GM12878 (cell line): ENCODE measurements at regions of chr9 and their contacts with region 1.

Region 1: GRCh38 chr9:125746017-125746773 is 978 bp upstream of the PBX3 start:
- DNase-seq: peak; percentile 82
- ATAC-seq: peak; percentile 86
- H3K4me3 ChIP-seq: peak overlapping the region; percentile 81; the same call in 1 of the 2 replicates
- H3K27ac ChIP-seq: peak overlapping the region; percentile 74
- H3K4me1 ChIP-seq: peaks cover 7% of the 10 kb centered on the region
- H3K27me3 ChIP-seq: no peaks in the 10 kb centered on the region
- CTCF ChIP-seq: no peak
- EP300 ChIP-seq: no peak
- POLR2A ChIP-seq: peak; percentile 85
- RAD21 ChIP-seq: no peak

Region 2: GRCh38 chr9:125700791-125701190 is 45.4 kb before region 1 on chr9:
- CTCF ChIA-PET with region 1: interaction called, 5 read pairs
- POLR2A ChIA-PET with region 1: interaction called, 15 read pairs
- RAD21 ChIA-PET with region 1: interaction called, 35 read pairs
- SMC1A ChIA-PET with region 1: interaction called, 34 read pairs
- in situ Hi-C with region 1: no loop called
- intact Hi-C with region 1: no loop called
- DNase-seq: peak; percentile 84
- ATAC-seq: peak; percentile 89
- H3K4me3 ChIP-seq: peak overlapping the region; percentile 46; the same call in 1 of the 2 replicates
- H3K27ac ChIP-seq: peak overlapping the region; percentile 68
- H3K4me1 ChIP-seq: peaks cover 22% of the 10 kb centered on the region
- H3K27me3 ChIP-seq: no peaks in the 10 kb centered on the region
- CTCF ChIP-seq: no peak
- EP300 ChIP-seq: peak; percentile 81 to 82; a peak in 2 of 4 replicates
- POLR2A ChIP-seq: no peak
- RAD21 ChIP-seq: no peak; the same call in 1 of the 2 replicates

Region 3: DNA sequence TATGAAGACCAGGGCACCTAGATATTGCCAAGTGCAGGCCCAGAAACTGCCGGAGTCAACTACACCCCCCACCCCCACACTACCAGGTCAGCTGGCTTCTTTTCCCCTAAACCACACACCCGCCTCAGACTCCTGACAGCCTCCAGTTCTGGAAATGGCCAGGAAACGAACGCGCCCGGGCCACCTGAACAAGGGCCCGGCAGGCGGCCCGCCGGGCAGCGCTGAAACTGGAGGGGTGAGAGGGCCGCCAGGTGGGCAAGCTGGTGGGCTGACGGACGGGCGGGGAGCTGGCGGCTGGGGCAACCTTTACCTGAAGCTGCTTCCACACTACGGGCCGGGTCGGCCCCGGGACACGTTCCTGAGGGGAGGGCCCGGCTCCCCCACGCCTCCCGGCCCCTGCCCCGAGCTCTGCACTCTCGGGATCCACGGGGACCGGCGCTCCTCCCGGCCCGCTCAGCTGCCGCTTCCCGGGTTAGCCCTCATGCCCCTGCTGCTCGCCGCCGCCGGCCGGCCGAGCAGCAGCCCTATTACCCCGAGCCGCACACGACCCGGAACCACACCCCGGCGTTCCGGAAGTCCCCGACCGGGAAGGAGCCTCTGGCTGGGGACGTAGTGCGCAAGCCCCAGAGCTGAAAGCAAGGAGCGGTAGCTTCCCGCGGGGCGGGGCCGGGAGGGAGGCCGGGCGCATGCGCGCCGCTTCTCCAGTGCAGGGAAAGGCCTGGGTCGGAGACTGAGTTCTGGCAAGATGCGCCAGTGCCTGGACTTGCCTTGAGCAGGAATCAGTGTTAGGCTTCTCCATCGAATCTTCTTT is 39.3 kb before region 1 on chr9 and contains the start of gene MAPKAP1:
- CTCF ChIA-PET with region 1: interaction called, 5 read pairs
- POLR2A ChIA-PET with region 1: interaction called, 15 read pairs
- RAD21 ChIA-PET with region 1: interaction called, 35 read pairs
- SMC1A ChIA-PET with region 1: interaction called, 34 read pairs
- in situ Hi-C with region 1: no loop called
- intact Hi-C with region 1: loop called (anchors 1 kb)
- DNase-seq: peak; percentile 81
- ATAC-seq: peak; percentile 94
- H3K4me3 ChIP-seq: peak within 1 kb of the TSS; percentile 90
- H3K27ac ChIP-seq: peak within 1 kb of the TSS; percentile 69
- H3K4me1 ChIP-seq: peaks cover 17% of the 10 kb centered on the region
- H3K27me3 ChIP-seq: no peaks in the 10 kb centered on the region
- CTCF ChIP-seq: no peak
- EP300 ChIP-seq: no peak
- POLR2A ChIP-seq: peak; percentile 95
- RAD21 ChIP-seq: no peak
- polyA plus RNA-seq, gene MAPKAP1: 5.1 to 11.7 TPM

Region 4: DNA sequence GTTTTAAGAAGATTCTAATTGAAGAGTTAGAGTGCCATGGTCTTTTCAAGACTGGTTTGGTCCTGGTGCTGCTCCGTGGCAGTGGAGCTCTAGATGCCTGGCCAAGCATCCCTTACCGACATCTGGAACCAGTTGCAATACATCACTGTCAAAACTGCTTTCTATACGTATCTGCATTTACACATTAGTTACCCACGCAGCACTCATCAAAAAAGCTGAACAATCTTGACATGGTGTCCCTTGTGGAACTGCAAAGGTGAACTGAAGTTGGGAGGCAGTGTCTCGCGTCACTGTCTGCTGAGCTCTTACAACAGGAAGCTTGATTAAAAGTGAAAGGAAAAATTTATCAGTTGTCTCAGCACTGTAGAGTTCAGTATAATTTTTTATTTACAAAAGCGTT is 83.5 kb after region 1 on chr9:
- CTCF ChIA-PET with region 1: no interaction called
- POLR2A ChIA-PET with region 1: interaction called, 3 read pairs
- RAD21 ChIA-PET with region 1: interaction called, 4 read pairs
- SMC1A ChIA-PET with region 1: interaction called, 10 read pairs
- in situ Hi-C with region 1: no loop called
- intact Hi-C with region 1: no loop called
- DNase-seq: peak; percentile 54
- ATAC-seq: peak; percentile 95
- H3K4me3 ChIP-seq: peak overlapping the region; percentile 44
- H3K27ac ChIP-seq: peak overlapping the region; percentile 15; the same call in 1 of the 2 replicates
- H3K4me1 ChIP-seq: no peaks in the 10 kb centered on the region; the same call in 1 of the 2 replicates
- H3K27me3 ChIP-seq: no peaks in the 10 kb centered on the region
- CTCF ChIP-seq: no peak
- EP300 ChIP-seq: no peak
- POLR2A ChIP-seq: peak; percentile 34; the same call in 1 of the 2 replicates
- RAD21 ChIP-seq: no peak

Region 5: GRCh38 chr9:126791406-126792151 is 1045.4 kb after region 1 on chr9:
- CTCF ChIA-PET with region 1: no interaction called
- POLR2A ChIA-PET with region 1: no interaction called
- RAD21 ChIA-PET with region 1: no interaction called
- SMC1A ChIA-PET with region 1: no interaction called
- in situ Hi-C with region 1: no loop called
- intact Hi-C with region 1: no loop called
- DNase-seq: no peak
- ATAC-seq: peak; percentile 51
- H3K4me3 ChIP-seq: no peak overlapping the region
- H3K27ac ChIP-seq: no peak overlapping the region
- H3K4me1 ChIP-seq: no peaks in the 10 kb centered on the region
- H3K27me3 ChIP-seq: peaks cover 1 to 2% of the 10 kb centered on the region in 2 experiments; a peak in 1 of 4 replicates
- CTCF ChIP-seq: no peak
- EP300 ChIP-seq: no peak
- POLR2A ChIP-seq: no peak
- RAD21 ChIP-seq: no peak